AG04449 (cell line): ENCODE measurements at regions of chr4 and their contacts with region 1.

Region 1: DNA sequence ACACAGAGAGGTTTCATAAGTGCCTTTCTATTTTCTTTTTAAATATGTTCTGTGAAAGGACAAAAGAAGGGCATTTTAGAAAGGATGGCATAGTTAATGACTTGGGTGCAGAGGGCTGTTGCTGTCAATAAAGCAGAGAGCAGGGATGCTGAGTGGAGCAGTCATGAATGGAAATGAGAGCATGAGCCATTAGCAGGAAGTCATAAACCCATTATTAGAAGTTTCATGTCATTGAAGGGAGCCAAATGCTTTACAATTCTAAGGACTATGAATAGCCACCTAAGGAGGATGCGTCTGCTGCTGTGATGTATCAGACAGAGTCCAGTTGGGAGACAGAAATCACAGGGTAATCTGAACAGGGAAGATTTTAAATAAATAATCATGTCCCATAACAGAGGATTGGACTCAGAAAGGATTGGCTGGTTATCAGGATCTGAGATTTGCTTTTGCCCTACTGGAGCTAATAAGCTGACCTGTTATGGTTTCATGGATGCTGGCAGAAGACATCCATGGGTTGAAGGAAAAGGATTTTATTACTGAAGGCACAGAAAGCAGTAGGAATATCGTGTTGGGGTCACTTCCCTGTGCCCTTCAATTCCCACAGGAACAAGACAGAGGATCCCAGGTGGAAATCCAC is 47.5 kb upstream of the WDR19 start:
- DNase-seq: no peak
- H3K4me3 ChIP-seq: peak overlapping the region; percentile 23; the same call in 1 of the 2 replicates
- CTCF ChIP-seq: no peak

Region 2: DNA sequence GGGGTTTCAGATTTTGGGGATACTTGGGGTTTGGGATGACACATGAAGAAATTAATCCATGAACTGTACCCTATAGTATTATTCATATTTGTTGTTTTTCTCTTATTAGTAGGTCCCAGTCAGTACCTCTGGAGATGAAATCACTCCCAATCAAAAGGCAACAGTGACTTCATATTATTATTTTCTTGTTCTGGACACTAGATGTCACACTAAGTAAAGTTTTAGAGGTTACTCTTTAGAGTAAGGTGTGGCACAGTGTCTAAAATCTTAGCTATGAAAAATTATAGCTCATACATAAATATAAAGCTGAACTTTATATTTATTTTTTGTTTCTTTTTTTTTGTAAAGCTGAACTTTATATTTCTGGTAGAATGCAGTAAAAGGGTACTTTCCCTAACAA is 232.1 kb before region 1 on chr4:
- CTCF ChIA-PET with region 1: interaction called, 48 read pairs
- POLR2A ChIA-PET with region 1: no interaction called
- DNase-seq: no peak
- H3K4me3 ChIP-seq: no peak overlapping the region
- CTCF ChIP-seq: no peak

Region 3: GRCh38 chr4:38940476-38940875 is 194.3 kb before region 1 on chr4:
- CTCF ChIA-PET with region 1: interaction called, 19 read pairs
- POLR2A ChIA-PET with region 1: no interaction called
- DNase-seq: no peak
- H3K4me3 ChIP-seq: no peak overlapping the region
- CTCF ChIP-seq: no peak

Region 4: DNA sequence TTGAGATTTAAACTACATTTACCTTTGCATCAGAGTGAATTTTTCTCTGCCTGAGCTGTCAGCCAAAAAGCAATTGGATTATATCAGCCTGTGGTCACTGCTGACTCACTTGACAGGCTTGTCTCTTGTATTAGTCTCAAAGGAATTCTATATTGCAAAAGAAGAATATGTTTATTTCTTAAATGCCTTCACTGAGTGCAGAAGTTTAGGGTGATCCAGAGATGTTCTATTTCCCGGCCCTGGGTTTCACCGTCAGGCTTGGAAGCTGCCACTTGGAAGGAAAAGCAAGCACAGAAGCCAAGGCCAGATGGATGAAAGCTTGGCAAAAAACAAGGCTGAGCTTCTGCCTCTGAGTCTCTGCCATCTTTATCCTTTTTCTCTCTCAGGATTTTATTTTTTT is 186.2 kb before region 1 on chr4:
- CTCF ChIA-PET with region 1: interaction called, 33 read pairs
- POLR2A ChIA-PET with region 1: no interaction called
- DNase-seq: peak; percentile 78
- H3K4me3 ChIP-seq: no peak overlapping the region
- CTCF ChIP-seq: no peak

Region 5: GRCh38 chr4:39114436-39114835 is 20.4 kb before region 1 on chr4:
- CTCF ChIA-PET with region 1: interaction called, 10 read pairs
- POLR2A ChIA-PET with region 1: interaction called, 3 read pairs
- DNase-seq: no peak
- H3K4me3 ChIP-seq: no peak overlapping the region
- CTCF ChIP-seq: no peak

Region 6: DNA sequence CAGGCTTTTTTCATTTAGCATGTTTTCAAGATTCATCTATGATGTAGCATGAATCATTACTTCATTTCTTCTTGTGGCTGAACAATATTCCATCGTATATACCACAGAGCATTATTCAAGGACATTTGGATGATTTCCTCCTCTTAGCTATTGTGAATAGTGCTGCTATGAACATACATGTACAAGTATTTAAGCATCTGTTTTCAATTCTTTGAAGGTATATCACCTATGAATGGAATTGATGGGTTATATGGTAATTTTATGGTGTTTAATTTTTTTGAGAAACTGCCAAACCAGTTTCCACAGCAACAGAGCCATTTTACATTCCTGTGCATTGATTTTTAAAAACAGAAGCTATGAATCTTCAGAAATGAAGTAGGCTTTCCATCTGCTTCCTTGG is 11.4 kb after region 1 on chr4:
- CTCF ChIA-PET with region 1: interaction called, 15 read pairs
- POLR2A ChIA-PET with region 1: no interaction called
- DNase-seq: no peak
- H3K4me3 ChIP-seq: no peak overlapping the region
- CTCF ChIP-seq: no peak

Region 7: DNA sequence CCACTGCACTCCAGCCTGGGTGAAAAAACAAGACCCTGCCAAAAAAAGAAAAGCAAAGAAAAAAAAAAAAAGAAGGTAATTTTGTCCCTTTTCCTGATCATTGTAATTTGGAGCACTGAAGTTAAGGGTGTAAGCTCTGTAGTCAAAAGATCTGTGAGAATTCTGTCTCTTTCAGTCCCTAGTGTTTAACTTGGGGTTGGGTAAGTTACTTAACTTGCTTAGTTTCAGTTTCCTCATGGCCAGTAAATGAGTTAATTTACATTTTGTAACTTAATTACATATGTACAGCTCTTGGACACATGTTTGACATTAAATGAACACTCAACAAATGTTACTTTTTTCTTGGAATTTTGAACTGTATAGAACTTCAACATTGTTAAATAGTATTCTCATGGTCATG is 552.2 kb after region 1 on chr4:
- CTCF ChIA-PET with region 1: no interaction called
- POLR2A ChIA-PET with region 1: no interaction called
- DNase-seq: no peak
- H3K4me3 ChIP-seq: no peak overlapping the region
- CTCF ChIP-seq: no peak